ENCODE measurements at regions of chr11 and their contacts with region 1.

Region 1: GRCh38 chr11:126989942-126990715 is 10.4 kb downstream of the KIRREL3 start:
- DNase-seq: peak; percentile 56 to 81 (median 72)
- ATAC-seq: peak; percentile 99
- H3K4me3 ChIP-seq: no peak overlapping the region
- H3K27ac ChIP-seq: no peak overlapping the region
- H3K4me1 ChIP-seq: no peaks in the 10 kb centered on the region
- H3K27me3 ChIP-seq: peaks cover 0 to 8% of the 10 kb centered on the region in 2 experiments; a peak in 2 of 5 replicates
- CTCF ChIP-seq: peak; percentile 83 to 89 (median 84)
- EP300 ChIP-seq: no peak
- POLR2A ChIP-seq: no peak
- RAD21 ChIP-seq: peak; percentile 71 to 81

Region 2: DNA sequence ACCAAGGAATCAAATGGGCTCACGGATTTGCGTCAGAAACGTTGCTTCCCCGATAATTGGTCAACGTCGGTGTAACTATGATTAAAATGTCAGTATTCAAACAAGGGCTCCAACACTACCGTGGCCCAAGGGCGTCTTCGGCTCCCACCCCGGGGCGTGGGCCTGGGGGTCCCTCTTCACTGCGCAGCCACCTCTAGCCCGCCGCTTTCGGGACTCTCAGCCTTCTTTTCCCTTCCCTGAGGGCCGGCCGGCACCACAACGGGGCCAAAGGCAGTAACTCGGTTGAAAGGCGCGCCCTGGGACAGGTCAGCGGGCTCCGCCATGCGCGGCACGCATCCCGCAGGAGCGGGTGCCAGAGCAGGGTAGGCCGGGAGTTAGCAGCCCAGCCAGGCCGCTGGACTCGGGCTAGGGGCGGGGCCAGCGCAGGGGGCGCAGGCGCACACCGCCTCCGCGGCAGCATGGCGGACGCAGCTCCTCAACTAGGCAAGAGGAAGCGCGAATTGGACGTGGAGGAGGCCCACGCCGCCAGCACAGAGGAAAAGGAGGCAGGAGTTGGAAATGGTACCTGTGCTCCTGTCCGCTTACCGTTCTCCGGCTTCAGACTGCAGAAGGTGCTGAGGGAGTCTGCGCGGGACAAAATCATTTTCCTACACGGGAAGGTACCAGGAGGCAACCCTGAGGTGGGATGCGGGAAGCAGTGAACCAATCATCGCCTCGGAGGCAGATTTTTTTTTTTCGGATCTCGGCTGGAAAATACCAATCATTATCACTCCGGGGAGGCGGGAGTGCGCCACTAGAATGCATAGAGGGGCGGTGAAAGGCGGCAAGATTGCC is 686.3 kb before region 1 on chr11 and contains the start of gene DCPS:
- CTCF ChIA-PET with region 1: no interaction called
- POLR2A ChIA-PET with region 1: no interaction called
- in situ Hi-C with region 1: loop called (anchors 25 kb)
- intact Hi-C with region 1: no loop called
- DNase-seq: peak; percentile 92 to 96 (median 96)
- ATAC-seq: peak; percentile 99
- H3K4me3 ChIP-seq: peak within 1 kb of the TSS; percentile 57
- H3K27ac ChIP-seq: peak within 1 kb of the TSS; percentile 86
- H3K4me1 ChIP-seq: peaks cover 4 to 11% of the 10 kb centered on the region in 2 experiments; a peak in 3 of 5 replicates
- H3K27me3 ChIP-seq: no peaks in the 10 kb centered on the region; a peak in 1 of 5 replicates
- CTCF ChIP-seq: no peak
- EP300 ChIP-seq: no peak
- POLR2A ChIP-seq: peak; percentile 97
- RAD21 ChIP-seq: peak in 1 of 2 experiments; percentile 13; a peak in 1 of 4 replicates
- polyA plus RNA-seq, gene DCPS: 8.7 to 17.8 TPM

Region 3: GRCh38 chr11:126607374-126607773 is 382.8 kb before region 1 on chr11:
- CTCF ChIA-PET with region 1: interaction called, 6 read pairs
- POLR2A ChIA-PET with region 1: interaction called, 3 read pairs
- in situ Hi-C with region 1: loop called (anchors 10 kb)
- intact Hi-C with region 1: loop called (anchors 1 kb)
- DNase-seq: peak; percentile 56 to 79 (median 74)
- ATAC-seq: peak; percentile 98
- H3K4me3 ChIP-seq: no peak overlapping the region
- H3K27ac ChIP-seq: no peak overlapping the region
- H3K4me1 ChIP-seq: no peaks in the 10 kb centered on the region
- H3K27me3 ChIP-seq: peaks cover 9 to 31% of the 10 kb centered on the region in 2 experiments
- CTCF ChIP-seq: peak; percentile 78 to 83 (median 80)
- EP300 ChIP-seq: no peak
- POLR2A ChIP-seq: no peak
- RAD21 ChIP-seq: peak; percentile 50 to 84

Region 4: DNA sequence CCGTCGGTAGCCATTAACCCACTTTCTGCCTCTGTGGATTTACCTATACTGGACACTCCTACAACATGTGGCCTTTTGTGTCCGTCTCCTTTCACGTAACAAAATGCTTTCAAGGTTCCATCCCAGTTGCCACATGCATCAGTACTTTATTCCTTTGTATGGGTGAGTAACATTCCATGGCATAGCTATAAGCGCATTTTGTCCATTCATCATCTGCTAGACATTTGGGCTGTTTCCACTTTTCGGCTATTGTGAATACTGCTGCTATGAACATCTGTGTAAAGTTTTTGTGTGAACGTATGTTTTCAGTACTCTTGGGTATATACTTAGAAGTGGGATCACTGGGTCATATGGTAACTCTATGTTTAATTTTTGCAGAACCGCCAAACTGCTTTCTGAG is 377.5 kb before region 1 on chr11:
- CTCF ChIA-PET with region 1: interaction called, 6 read pairs
- POLR2A ChIA-PET with region 1: interaction called, 3 read pairs
- in situ Hi-C with region 1: loop called (anchors 10 kb)
- intact Hi-C with region 1: loop called (anchors 1 kb)
- DNase-seq: no peak
- ATAC-seq: no peak
- H3K4me3 ChIP-seq: no peak overlapping the region
- H3K27ac ChIP-seq: no peak overlapping the region
- H3K4me1 ChIP-seq: no peaks in the 10 kb centered on the region
- H3K27me3 ChIP-seq: peaks cover 8 to 18% of the 10 kb centered on the region in 2 experiments
- CTCF ChIP-seq: no peak
- EP300 ChIP-seq: no peak
- POLR2A ChIP-seq: no peak
- RAD21 ChIP-seq: no peak

Region 5: GRCh38 chr11:126716456-126717083 is 273.6 kb before region 1 on chr11:
- CTCF ChIA-PET with region 1: interaction called, 3 read pairs
- POLR2A ChIA-PET with region 1: no interaction called
- in situ Hi-C with region 1: loop called (anchors 25 kb)
- intact Hi-C with region 1: loop called (anchors 1 kb)
- DNase-seq: peak; percentile 46 to 56 (median 50)
- ATAC-seq: peak; percentile 82
- H3K4me3 ChIP-seq: no peak overlapping the region
- H3K27ac ChIP-seq: no peak overlapping the region
- H3K4me1 ChIP-seq: peaks cover 0 to 7% of the 10 kb centered on the region in 2 experiments; a peak in 2 of 5 replicates
- H3K27me3 ChIP-seq: peaks cover 0 to 25% of the 10 kb centered on the region in 2 experiments; a peak in 2 of 5 replicates
- CTCF ChIP-seq: peak; percentile 61 to 74 (median 62)
- EP300 ChIP-seq: no peak
- POLR2A ChIP-seq: no peak
- RAD21 ChIP-seq: peak; percentile 31 to 65; a peak in 3 of 4 replicates

Region 6: GRCh38 chr11:126739499-126740145 is 250.5 kb before region 1 on chr11:
- CTCF ChIA-PET with region 1: no interaction called
- POLR2A ChIA-PET with region 1: no interaction called
- in situ Hi-C with region 1: no loop called
- intact Hi-C with region 1: no loop called
- DNase-seq: no peak
- ATAC-seq: no peak
- H3K4me3 ChIP-seq: no peak overlapping the region
- H3K27ac ChIP-seq: no peak overlapping the region
- H3K4me1 ChIP-seq: no peaks in the 10 kb centered on the region
- H3K27me3 ChIP-seq: 0 out of 5 replicates have a peak, but pooled peaks cover 2 to 5% of the 10 kb centered on the region in 2 experiments
- CTCF ChIP-seq: no peak
- EP300 ChIP-seq: no peak
- POLR2A ChIP-seq: no peak
- RAD21 ChIP-seq: no peak

Region 7: GRCh38 chr11:126874831-126875230 is 115.3 kb before region 1 on chr11:
- CTCF ChIA-PET with region 1: no interaction called
- POLR2A ChIA-PET with region 1: no interaction called
- in situ Hi-C with region 1: no loop called
- intact Hi-C with region 1: loop called (anchors 2 kb)
- DNase-seq: peak; percentile 13 to 29 (median 18)
- ATAC-seq: peak; percentile 76
- H3K4me3 ChIP-seq: no peak overlapping the region
- H3K27ac ChIP-seq: no peak overlapping the region
- H3K4me1 ChIP-seq: no peaks in the 10 kb centered on the region
- H3K27me3 ChIP-seq: no peaks in the 10 kb centered on the region
- CTCF ChIP-seq: peak in 2 of 3 experiments; percentile 39 to 43; a peak in 2 of 6 replicates
- EP300 ChIP-seq: no peak
- POLR2A ChIP-seq: no peak
- RAD21 ChIP-seq: peak in 1 of 2 experiments; percentile 30; a peak in 1 of 4 replicates

Region 8: GRCh38 chr11:126978911-126979310 is 11.2 kb before region 1 on chr11:
- CTCF ChIA-PET with region 1: no interaction called
- POLR2A ChIA-PET with region 1: no interaction called
- in situ Hi-C with region 1: no loop called
- intact Hi-C with region 1: no loop called
- DNase-seq: no peak
- ATAC-seq: no peak
- H3K4me3 ChIP-seq: no peak overlapping the region
- H3K27ac ChIP-seq: no peak overlapping the region
- H3K4me1 ChIP-seq: no peaks in the 10 kb centered on the region
- H3K27me3 ChIP-seq: no peaks in the 10 kb centered on the region; a peak in 1 of 5 replicates
- CTCF ChIP-seq: no peak
- EP300 ChIP-seq: no peak
- POLR2A ChIP-seq: no peak
- RAD21 ChIP-seq: no peak

Region 9: DNA sequence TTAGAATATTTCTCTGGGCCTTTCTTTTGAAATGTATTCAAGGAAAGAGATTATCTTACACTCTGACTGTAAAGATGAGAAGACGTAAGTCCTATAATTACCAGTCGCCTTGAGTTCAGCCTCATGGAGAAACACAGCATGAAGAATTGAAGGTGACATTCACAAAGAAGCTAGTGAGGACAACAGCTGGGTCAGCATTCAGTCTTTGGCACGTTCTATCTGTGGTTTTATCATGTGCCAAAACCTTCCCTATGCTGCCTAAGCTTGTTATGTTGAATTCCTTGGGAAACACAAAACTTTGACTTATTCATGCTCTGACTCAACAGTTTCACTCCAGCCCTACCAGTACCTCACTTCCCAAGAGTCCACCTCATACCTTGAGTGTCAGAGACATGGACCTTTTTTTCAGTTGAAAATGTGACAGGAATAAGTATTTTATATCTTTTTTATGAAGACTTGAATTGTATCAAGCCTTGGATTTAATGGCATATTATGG is 209.2 kb after region 1 on chr11:
- CTCF ChIA-PET with region 1: no interaction called
- POLR2A ChIA-PET with region 1: no interaction called
- in situ Hi-C with region 1: no loop called
- intact Hi-C with region 1: no loop called
- DNase-seq: no peak
- ATAC-seq: no peak
- H3K4me3 ChIP-seq: no peak overlapping the region
- H3K27ac ChIP-seq: no peak overlapping the region
- H3K4me1 ChIP-seq: no peaks in the 10 kb centered on the region
- H3K27me3 ChIP-seq: no peaks in the 10 kb centered on the region
- CTCF ChIP-seq: no peak
- EP300 ChIP-seq: no peak
- POLR2A ChIP-seq: no peak
- RAD21 ChIP-seq: no peak

Measured in K562 (cell line).